ENCODE measurements at regions of chr10 and their contacts with region 1.

Region 1: GRCh38 chr10:82558014-82558607 is 683.1 kb downstream of the NRG3 start:
- H3K4me3 ChIP-seq: no peak overlapping the region
- H3K27ac ChIP-seq: no peak overlapping the region
- H3K4me1 ChIP-seq: no peaks in the 10 kb centered on the region; the same call in 1 of the 2 replicates
- CTCF ChIP-seq: no peak

Region 2: DNA sequence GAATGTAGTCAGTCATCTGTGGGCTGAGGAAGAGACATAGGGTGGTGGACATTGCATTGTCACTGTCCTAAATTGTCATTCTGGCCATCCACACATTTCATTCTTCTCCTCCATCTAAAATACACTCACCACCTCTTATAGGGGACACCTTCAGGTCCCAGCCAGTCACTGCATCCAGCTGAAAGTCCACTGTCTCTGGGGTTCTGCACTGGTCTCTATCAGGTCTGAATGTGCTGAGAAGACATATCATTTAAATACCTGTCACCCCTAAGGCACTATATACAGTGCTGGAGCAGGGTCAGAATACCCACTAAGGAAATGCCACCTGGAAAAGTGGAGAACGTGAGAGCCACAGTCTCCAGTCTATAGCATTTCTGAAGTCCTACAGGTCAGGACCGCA is 1990.8 kb before region 1 on chr10:
- CTCF ChIA-PET with region 1: no interaction called
- POLR2A ChIA-PET with region 1: interaction called, 10 read pairs
- H3K4me3 ChIP-seq: no peak overlapping the region
- H3K27ac ChIP-seq: no peak overlapping the region
- H3K4me1 ChIP-seq: no peaks in the 10 kb centered on the region
- CTCF ChIP-seq: no peak

Region 3: GRCh38 chr10:82429302-82429701 is 128.8 kb before region 1 on chr10:
- CTCF ChIA-PET with region 1: no interaction called
- POLR2A ChIA-PET with region 1: no interaction called
- H3K4me3 ChIP-seq: no peak overlapping the region
- H3K27ac ChIP-seq: no peak overlapping the region
- H3K4me1 ChIP-seq: no peaks in the 10 kb centered on the region
- CTCF ChIP-seq: no peak

Region 4: DNA sequence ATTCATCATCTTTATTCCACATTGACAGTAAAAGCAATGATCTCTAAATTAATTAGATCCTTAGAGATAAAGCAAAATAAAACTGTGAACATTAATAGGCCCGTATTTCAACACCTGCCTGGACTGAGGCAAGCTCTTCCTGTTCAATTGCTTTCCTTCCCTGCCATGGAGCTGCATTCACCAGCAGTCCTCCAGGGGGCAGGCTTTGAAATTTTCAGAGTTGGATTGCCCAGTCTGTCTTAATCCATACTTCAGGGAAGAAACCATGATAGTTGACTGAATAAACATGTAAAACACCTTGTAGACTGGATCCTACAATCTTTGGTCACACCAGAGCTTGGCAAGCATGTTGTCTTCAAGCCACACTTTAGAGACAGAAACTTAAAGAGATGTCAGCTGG is 253.5 kb after region 1 on chr10:
- CTCF ChIA-PET with region 1: no interaction called
- POLR2A ChIA-PET with region 1: no interaction called
- H3K4me3 ChIP-seq: no peak overlapping the region
- H3K27ac ChIP-seq: no peak overlapping the region
- H3K4me1 ChIP-seq: no peaks in the 10 kb centered on the region
- CTCF ChIP-seq: no peak